H1 (cell line): ENCODE measurements at regions of chr12 and their contacts with region 1.

Region 1: DNA sequence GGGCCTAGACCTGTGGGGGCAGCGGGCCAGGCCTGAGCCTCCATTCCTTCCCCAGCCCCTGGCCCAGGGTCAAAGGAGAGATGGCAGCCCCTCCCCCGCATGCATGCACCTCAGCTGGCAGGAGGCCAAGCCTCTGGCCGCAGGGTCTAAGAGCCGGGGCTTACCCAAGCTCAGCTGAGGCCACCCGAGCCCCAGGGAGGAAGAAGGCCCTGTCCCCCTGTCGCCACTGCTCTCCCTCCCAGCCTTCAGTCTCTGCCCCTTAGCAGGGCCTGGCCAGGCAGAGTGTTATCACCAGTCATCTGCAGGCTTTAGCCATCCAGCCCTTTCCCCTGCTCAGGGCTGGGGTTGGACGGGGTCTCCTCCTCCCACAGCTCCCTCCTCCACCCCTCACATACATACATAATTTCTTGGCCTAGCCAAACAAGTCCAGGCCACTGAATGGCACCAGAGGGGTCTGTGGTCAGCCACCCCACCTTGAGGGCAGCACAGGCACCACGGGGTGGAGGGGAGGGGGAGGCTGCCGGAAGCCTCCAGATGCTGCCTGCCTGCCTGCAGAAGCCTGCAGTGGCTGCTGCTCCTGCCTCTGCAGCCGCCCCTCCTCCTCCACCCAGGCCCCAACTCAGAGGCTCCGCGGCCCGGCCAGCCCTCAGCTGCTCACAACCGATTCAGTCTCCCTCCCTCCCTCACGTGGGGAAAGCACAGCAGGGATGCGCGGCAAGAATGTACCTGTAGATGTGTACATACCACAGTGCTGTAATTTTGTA is 22.8 kb downstream of the RAB35 start:
- DNase-seq: peak in 1 of 2 experiments; percentile 86
- H3K4me3 ChIP-seq: peak overlapping the region in 2 of 4 experiments; percentile 11 to 14; a peak in 3 of 8 replicates
- H3K27ac ChIP-seq: peak overlapping the region; percentile 58; the same call in 1 of the 2 replicates
- H3K4me1 ChIP-seq: peaks cover 6 to 38% (median 29%) of the 10 kb centered on the region in 4 experiments
- H3K27me3 ChIP-seq: no peaks in the 10 kb centered on the region
- CTCF ChIP-seq: no peak
- EP300 ChIP-seq: no peak
- POLR2A ChIP-seq: peak in 1 of 2 experiments; percentile 34; a peak in 1 of 3 replicates
- RAD21 ChIP-seq: no peak; a peak in 1 of 4 replicates

Region 2: DNA sequence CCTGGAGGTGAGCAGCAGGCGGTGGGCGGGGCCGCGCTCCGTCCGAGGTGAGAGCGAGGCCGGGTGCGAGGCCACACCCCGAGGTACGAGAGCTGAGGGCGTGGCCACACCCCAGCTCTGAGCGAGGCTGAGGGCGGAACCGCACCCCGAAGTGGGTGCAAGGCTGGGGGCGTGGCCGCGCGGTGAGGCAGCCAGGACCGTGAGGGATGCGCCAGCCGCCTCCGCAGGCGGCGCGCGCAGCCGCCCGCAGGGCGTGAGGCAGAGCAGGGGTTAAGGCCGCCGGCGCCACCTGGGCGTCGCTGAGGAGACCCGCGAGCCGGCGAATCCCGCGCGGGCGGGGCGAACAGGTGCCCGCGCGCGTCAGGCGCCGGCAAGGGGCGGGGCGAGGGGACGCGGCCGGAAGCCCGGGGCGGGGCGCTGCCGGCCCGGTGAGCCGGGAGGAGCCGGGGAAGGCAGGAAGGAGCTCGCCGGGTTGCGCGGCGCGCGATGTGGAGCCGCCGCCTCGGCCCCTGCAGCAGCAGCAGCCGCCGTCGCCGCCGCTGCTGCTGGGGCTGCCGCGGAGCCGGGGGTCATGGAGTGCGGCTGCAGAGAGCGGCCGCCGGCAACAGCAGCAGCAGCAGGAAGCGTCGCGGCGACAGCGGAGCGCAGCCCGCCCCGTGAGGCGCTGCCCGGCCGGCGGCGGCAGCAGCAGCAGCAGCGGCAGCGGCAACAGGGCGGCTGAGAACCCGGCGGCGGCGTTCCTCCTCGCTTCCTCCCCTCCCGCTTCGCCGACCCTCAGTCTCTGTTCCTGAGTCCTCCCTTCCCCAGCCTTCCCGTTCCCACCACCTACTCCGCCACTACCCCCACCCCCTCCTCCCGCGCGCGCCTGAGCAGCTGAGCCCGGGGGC is 104.7 kb before region 1 on chr12 and contains the start of gene BICDL1:
- CTCF ChIA-PET with region 1: interaction called, 12 read pairs
- POLR2A ChIA-PET with region 1: interaction called, 4 read pairs
- DNase-seq: peak; percentile 93 to 96
- H3K4me3 ChIP-seq: peak within 1 kb of the TSS; percentile 59 to 69 (median 62)
- H3K27ac ChIP-seq: no peak within 1 kb of the TSS
- H3K4me1 ChIP-seq: peaks cover 6 to 11% (median 9%) of the 10 kb centered on the region in 4 experiments
- H3K27me3 ChIP-seq: no peaks in the 10 kb centered on the region; a peak in 2 of 7 replicates
- CTCF ChIP-seq: no peak
- EP300 ChIP-seq: no peak
- POLR2A ChIP-seq: no peak
- RAD21 ChIP-seq: no peak
- total RNA-seq, gene BICDL1: 25.9 and 26.9 TPM in 2 replicates

Region 3: GRCh38 chr12:120110550-120111501 is 17.1 kb after region 1 on chr12:
- CTCF ChIA-PET with region 1: interaction called, 4 read pairs
- POLR2A ChIA-PET with region 1: interaction called, 96 read pairs
- DNase-seq: peak in 1 of 2 experiments; percentile 61
- H3K4me3 ChIP-seq: no peak overlapping the region
- H3K27ac ChIP-seq: peak overlapping the region; percentile 30
- H3K4me1 ChIP-seq: peaks cover 8 to 17% (median 11%) of the 10 kb centered on the region in 4 experiments
- H3K27me3 ChIP-seq: no peaks in the 10 kb centered on the region
- CTCF ChIP-seq: no peak
- EP300 ChIP-seq: no peak
- POLR2A ChIP-seq: no peak
- RAD21 ChIP-seq: no peak

Region 4: DNA sequence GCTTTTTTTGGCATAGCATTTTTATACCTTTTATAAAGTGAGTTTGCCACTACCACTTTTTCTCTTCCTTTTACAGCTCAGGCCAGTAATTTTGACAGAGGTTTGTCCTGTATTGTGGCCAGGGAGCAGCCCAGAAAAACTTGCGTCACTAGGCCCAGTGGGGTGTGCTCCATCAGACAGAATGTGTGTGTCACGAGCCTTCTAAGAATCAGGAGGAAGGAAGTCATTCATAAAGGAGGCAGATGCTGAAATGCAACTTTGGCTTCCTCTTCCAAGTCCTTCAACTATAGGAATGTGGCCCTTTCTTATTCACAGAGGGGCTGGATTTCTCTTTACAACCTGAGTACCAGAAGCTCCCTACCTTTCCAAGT is 32.8 kb after region 1 on chr12:
- CTCF ChIA-PET with region 1: no interaction called
- POLR2A ChIA-PET with region 1: interaction called, 12 read pairs
- DNase-seq: no peak
- H3K4me3 ChIP-seq: no peak overlapping the region
- H3K27ac ChIP-seq: no peak overlapping the region
- H3K4me1 ChIP-seq: peaks cover 0 to 2% (median under 1%) of the 10 kb centered on the region in 4 experiments; a peak in 1 of 7 replicates
- H3K27me3 ChIP-seq: no peaks in the 10 kb centered on the region; a peak in 1 of 7 replicates
- CTCF ChIP-seq: no peak
- EP300 ChIP-seq: no peak
- POLR2A ChIP-seq: no peak
- RAD21 ChIP-seq: no peak